MCF 10A (cell line): ENCODE measurements at regions of chr1 and their contacts with region 1.

Region 1: DNA sequence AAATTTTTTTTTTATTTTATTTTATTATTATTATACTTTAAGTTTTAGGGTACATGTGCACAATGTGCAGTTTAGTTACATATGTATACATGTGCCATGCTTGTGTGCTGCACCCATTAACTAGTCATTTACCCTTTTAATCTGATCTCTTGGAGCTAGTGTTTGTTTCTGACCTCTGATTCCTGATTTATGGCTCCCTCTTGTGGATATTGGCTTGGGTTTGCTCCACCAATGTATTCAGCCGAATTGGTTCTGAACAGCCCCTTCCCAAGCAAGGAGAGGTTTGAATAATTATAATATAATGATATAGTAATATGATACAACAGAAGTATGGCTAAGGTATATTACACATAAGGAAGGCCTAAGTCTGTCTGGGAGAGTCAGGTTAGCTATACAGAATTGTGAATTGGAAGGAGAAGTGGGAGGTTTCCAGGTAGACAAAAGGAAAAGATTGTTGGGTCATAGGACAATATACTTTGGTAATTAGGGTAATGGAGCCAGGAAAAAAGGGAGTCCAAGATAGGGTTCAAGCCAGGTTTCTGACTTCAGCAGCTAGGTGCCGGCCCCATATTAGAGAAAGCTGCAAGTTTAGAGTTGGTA is 53.1 kb upstream of the HMCN1 start:
- DNase-seq: peak; percentile 81
- H3K4me3 Mint-ChIP-seq: no peak overlapping the region
- H3K27ac Mint-ChIP-seq: no peak overlapping the region
- H3K4me1 Mint-ChIP-seq: no peaks in the 10 kb centered on the region
- H3K27me3 Mint-ChIP-seq: no peaks in the 10 kb centered on the region
- CTCF ChIP-seq: peak; percentile 60

Region 2: DNA sequence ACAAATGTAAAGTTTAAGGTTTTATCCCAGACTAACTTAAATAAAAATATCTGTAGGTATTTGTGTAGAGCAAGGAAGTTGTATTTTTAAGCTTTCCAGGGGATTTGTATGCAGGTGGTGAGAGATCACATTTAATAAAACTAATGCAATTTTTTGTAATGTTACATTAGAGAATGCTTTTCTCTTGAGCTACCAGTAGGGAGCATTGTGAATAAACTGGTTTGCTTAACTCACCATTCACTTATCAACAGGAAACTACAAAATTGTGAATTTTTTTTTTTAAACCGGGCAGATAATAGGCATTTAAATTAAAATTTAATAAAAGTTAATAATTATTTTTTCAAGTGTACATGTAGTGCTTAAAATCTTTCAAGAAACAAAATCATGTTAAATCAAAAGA is 442.7 kb before region 1 on chr1:
- CTCF ChIA-PET with region 1: interaction called, 48 read pairs
- POLR2A ChIA-PET with region 1: interaction called, 3 read pairs
- intact Hi-C with region 1: loop called (anchors 5 kb)
- DNase-seq: peak; percentile 24
- H3K4me3 Mint-ChIP-seq: no peak overlapping the region
- H3K27ac Mint-ChIP-seq: no peak overlapping the region
- H3K4me1 Mint-ChIP-seq: no peaks in the 10 kb centered on the region
- H3K27me3 Mint-ChIP-seq: no peaks in the 10 kb centered on the region
- CTCF ChIP-seq: peak; percentile 25

Region 3: DNA sequence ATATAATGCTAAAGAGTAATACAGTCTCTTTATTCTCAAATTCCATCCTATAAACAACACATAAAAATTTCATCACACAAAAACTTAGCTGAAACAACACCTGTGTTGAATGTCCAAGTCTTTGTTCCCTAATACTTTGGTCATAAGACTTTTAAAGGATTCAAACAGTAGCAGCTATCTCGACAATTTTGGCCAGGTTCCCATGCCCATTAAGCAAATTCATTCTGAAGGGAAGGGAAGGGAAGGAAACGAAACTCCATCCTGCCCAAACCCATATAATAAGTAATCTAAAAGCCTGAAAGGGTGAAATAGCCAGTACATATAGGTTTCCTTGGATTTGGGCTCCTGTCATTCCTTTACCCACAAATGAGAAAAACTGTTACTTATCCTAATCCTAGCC is 371.6 kb before region 1 on chr1:
- CTCF ChIA-PET with region 1: interaction called, 23 read pairs
- POLR2A ChIA-PET with region 1: interaction called, 3 read pairs
- intact Hi-C with region 1: no loop called
- DNase-seq: no peak
- H3K4me3 Mint-ChIP-seq: no peak overlapping the region
- H3K27ac Mint-ChIP-seq: peak overlapping the region; percentile 67
- H3K4me1 Mint-ChIP-seq: peaks cover 34% of the 10 kb centered on the region
- H3K27me3 Mint-ChIP-seq: no peaks in the 10 kb centered on the region
- CTCF ChIP-seq: no peak

Region 4: DNA sequence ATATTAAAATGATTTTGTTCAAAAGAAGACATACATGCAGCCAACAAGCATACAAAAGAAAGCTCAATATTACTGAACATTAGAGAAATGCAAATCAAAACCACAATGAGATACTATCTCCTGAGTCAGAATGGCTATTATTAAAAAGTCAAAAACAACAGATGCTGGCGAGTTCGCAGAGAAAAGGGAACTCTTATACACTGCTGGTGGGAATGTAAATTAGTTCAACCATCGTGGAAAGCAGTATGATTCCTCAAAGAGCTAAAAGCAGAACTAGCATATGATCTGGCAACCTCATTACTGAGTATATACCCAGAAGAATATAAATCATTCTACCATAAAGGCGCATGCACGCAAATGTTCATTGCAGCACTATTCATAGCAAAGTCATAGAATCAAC is 73.0 kb before region 1 on chr1:
- CTCF ChIA-PET with region 1: no interaction called
- POLR2A ChIA-PET with region 1: no interaction called
- intact Hi-C with region 1: no loop called
- DNase-seq: no peak
- H3K4me3 Mint-ChIP-seq: no peak overlapping the region
- H3K27ac Mint-ChIP-seq: no peak overlapping the region
- H3K4me1 Mint-ChIP-seq: peaks cover 5% of the 10 kb centered on the region
- H3K27me3 Mint-ChIP-seq: no peaks in the 10 kb centered on the region
- CTCF ChIP-seq: no peak

Region 5: DNA sequence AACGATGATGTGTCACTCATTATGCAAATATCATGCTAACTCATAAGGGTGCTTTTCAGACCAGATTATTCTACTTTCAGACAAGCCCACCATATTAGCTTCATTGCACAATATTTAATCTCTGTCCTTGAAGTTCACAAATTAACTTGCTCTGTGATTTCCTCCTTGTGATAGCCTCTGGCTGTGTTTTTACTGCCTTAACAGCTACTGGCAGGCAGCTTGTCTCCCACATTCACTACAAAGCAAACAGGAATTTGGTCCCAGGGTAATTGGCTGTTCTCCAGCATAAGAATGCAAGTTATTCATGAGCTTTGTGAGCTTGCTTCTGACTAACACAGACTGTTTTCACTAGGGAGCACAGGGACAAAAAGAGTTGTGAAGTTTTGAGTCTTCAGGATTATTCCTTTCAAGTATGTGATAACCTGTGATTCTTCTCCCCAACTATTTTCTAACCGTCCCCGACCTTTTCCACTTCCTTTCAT is 34.9 kb before region 1 on chr1:
- CTCF ChIA-PET with region 1: interaction called, 37 read pairs
- POLR2A ChIA-PET with region 1: interaction called, 3 read pairs
- intact Hi-C with region 1: no loop called
- DNase-seq: peak; percentile 99
- H3K4me3 Mint-ChIP-seq: peak overlapping the region; percentile 68
- H3K27ac Mint-ChIP-seq: peak overlapping the region; percentile 88
- H3K4me1 Mint-ChIP-seq: peaks cover 29% of the 10 kb centered on the region
- H3K27me3 Mint-ChIP-seq: no peaks in the 10 kb centered on the region
- CTCF ChIP-seq: no peak

Region 6: GRCh38 chr1:185663332-185663731 is 17.8 kb before region 1 on chr1:
- CTCF ChIA-PET with region 1: interaction called, 12 read pairs
- POLR2A ChIA-PET with region 1: interaction called, 10 read pairs
- intact Hi-C with region 1: no loop called
- DNase-seq: no peak
- H3K4me3 Mint-ChIP-seq: no peak overlapping the region
- H3K27ac Mint-ChIP-seq: no peak overlapping the region
- H3K4me1 Mint-ChIP-seq: no peaks in the 10 kb centered on the region
- H3K27me3 Mint-ChIP-seq: no peaks in the 10 kb centered on the region
- CTCF ChIP-seq: no peak

Region 7: GRCh38 chr1:185694081-185694480 is 12.9 kb after region 1 on chr1:
- CTCF ChIA-PET with region 1: interaction called, 53 read pairs
- POLR2A ChIA-PET with region 1: interaction called, 4 read pairs
- intact Hi-C with region 1: no loop called
- DNase-seq: no peak
- H3K4me3 Mint-ChIP-seq: no peak overlapping the region
- H3K27ac Mint-ChIP-seq: peak overlapping the region; percentile 4
- H3K4me1 Mint-ChIP-seq: peaks cover 6% of the 10 kb centered on the region
- H3K27me3 Mint-ChIP-seq: no peaks in the 10 kb centered on the region
- CTCF ChIP-seq: no peak

Region 8: GRCh38 chr1:185917646-185918045 is 236.5 kb after region 1 on chr1:
- CTCF ChIA-PET with region 1: no interaction called
- POLR2A ChIA-PET with region 1: no interaction called
- intact Hi-C with region 1: no loop called
- DNase-seq: peak; percentile 71
- H3K4me3 Mint-ChIP-seq: no peak overlapping the region
- H3K27ac Mint-ChIP-seq: no peak overlapping the region
- H3K4me1 Mint-ChIP-seq: no peaks in the 10 kb centered on the region
- H3K27me3 Mint-ChIP-seq: no peaks in the 10 kb centered on the region
- CTCF ChIP-seq: no peak